ENCODE measurements at regions of chr1 and their contacts with region 1.

Region 1: DNA sequence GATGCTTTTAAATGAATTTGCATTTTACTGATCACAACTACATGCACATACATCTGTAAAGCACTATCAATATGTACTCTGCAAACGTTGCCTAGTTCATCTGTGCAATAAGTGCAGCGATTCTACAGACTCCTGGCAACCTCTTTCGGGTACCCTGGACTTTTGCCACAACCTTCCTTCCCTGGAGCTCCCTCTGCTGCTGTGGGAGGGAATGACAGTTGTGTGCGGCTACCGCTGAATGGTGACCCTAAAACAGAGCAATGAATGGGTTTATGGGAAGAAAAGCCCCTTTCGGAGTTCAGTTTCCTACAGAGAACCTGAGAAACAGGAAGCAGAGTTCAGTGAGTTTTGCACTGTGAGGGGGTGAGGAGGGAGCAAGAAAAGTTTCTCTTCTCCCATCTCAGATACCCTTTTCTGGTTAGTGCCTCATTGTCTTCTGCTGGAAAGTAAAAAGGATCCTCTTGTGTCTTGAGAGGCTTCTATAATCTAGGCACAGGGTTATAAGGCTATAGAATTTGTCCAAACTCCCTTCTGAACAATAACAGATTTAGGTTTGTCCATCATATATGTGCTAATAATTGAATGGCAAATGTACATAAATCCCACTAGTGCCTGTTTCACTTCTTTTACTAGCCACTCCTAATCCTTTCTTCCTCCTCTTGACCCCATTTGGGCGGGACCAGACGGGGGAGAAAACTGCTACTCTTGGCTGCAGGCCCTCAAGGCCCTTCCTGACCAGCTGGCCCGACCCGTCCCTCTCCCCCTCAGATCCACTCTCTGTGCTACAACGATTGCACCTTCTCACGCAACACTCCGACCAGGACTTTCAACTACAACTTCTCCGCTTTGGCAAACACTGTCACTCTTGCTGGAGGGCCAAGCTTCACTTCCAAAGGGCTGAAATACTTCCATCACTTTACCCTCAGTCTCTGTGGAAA is 19.8 kb upstream of the SARS1 start:
- DNase-seq: peak in 7 of 9 donors; percentile 25 to 68 (median 42)
- ATAC-seq: peak; percentile 81
- H3K4me3 ChIP-seq: no peak overlapping the region
- H3K4me3 Mint-ChIP-seq: no peak overlapping the region
- H3K27ac ChIP-seq: no peak overlapping the region
- H3K27ac Mint-ChIP-seq: peak overlapping the region in 1 of 9 donors; percentile 76
- H3K4me1 ChIP-seq: peaks cover 0 to 1% of the 10 kb centered on the region in 2 donors
- H3K4me1 Mint-ChIP-seq: peaks cover 2 to 18% (median 5%) of the 10 kb centered on the region in 7 donors
- H3K27me3 ChIP-seq: no peaks in the 10 kb centered on the region
- H3K27me3 Mint-ChIP-seq: no peaks in the 10 kb centered on the region

Region 2: GRCh38 chr1:108828022-108828961 is 365.6 kb before region 1 on chr1:
- CTCF ChIA-PET with region 1: no interaction called
- POLR2A ChIA-PET with region 1: no interaction called
- intact Hi-C with region 1: loop called in 1 of 2 experiments (anchors 5 kb)
- DNase-seq: peak; percentile 37 to 62 (median 46)
- ATAC-seq: peak; percentile 61
- H3K4me3 ChIP-seq: no peak overlapping the region
- H3K4me3 Mint-ChIP-seq: no peak overlapping the region
- H3K27ac ChIP-seq: no peak overlapping the region
- H3K27ac Mint-ChIP-seq: no peak overlapping the region
- H3K4me1 ChIP-seq: no peaks in the 10 kb centered on the region
- H3K4me1 Mint-ChIP-seq: peaks cover 0 to 9% (median 0%) of the 10 kb centered on the region in 7 donors
- H3K27me3 ChIP-seq: peaks cover 0 to 3% of the 10 kb centered on the region in 2 donors
- H3K27me3 Mint-ChIP-seq: peaks cover 0 to 12% (median 0%) of the 10 kb centered on the region in 5 donors

Region 3: GRCh38 chr1:109090196-109091077 is 103.5 kb before region 1 on chr1 and contains the start of gene TMEM167B:
- CTCF ChIA-PET with region 1: no interaction called
- POLR2A ChIA-PET with region 1: no interaction called
- intact Hi-C with region 1: loop called in 1 of 2 experiments (anchors 1 kb)
- DNase-seq: peak; percentile 71 to 92 (median 87)
- ATAC-seq: peak; percentile 98
- H3K4me3 ChIP-seq: peak within 1 kb of the TSS; percentile 84
- H3K4me3 Mint-ChIP-seq: peak within 1 kb of the TSS; percentile 88 to 98 (median 96)
- H3K27ac ChIP-seq: peak within 1 kb of the TSS; percentile 97
- H3K27ac Mint-ChIP-seq: peak within 1 kb of the TSS; percentile 90 to 99 (median 98)
- H3K4me1 ChIP-seq: peaks cover 14 to 18% of the 10 kb centered on the region in 2 donors
- H3K4me1 Mint-ChIP-seq: peaks cover 15 to 43% (median 36%) of the 10 kb centered on the region in 7 donors
- H3K27me3 ChIP-seq: no peaks in the 10 kb centered on the region
- H3K27me3 Mint-ChIP-seq: no peaks in the 10 kb centered on the region
- total RNA-seq, gene TMEM167B: 33.2 to 65.6 (median 41.2) TPM

Region 4: DNA sequence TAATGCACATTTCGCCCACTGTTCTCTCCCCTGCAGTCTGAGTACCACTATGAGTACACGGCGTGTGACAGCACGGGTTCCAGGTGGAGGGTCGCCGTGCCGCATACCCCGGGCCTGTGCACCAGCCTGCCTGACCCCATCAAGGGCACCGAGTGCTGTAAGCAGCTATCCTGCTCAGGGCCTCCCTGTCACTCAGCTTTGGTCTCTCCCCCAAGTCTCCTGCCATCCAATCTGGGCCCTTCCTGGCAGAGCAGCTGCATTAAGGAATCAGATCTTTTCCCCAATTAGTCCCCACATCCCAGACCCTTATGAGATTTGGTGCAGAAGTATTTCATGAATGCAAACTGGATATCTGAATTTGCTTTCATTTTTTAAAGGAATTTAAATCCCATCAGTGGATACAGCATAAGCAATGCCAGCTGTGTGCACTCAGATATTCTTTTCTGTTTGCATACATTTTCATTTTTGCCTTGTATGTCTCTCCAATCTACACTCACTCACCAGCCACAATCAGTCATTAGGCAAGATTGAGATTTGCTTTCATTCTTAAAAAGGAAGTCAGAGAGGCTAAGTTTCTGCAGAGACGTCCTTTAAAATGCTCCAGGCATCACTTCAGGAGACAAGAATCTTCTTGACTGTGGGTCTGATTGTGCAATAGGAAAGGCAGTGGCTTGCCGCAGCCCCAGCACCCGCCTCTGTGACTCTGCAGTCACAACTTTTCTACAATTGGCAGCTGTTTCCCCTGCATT is 31.9 kb before region 1 on chr1:
- CTCF ChIA-PET with region 1: interaction called, 4 read pairs
- POLR2A ChIA-PET with region 1: no interaction called
- intact Hi-C with region 1: loop called in 1 of 2 experiments (anchors 1 kb)
- DNase-seq: peak in 5 of 9 donors; percentile 5 to 45 (median 12)
- ATAC-seq: peak; percentile 88
- H3K4me3 ChIP-seq: no peak overlapping the region
- H3K4me3 Mint-ChIP-seq: peak overlapping the region in 6 of 10 donors; percentile 31 to 72 (median 52)
- H3K27ac ChIP-seq: no peak overlapping the region
- H3K27ac Mint-ChIP-seq: peak overlapping the region in 8 of 9 donors; percentile 58 to 87 (median 75)
- H3K4me1 ChIP-seq: peaks cover 0 to 14% of the 10 kb centered on the region in 2 donors
- H3K4me1 Mint-ChIP-seq: peaks cover 9 to 24% (median 18%) of the 10 kb centered on the region in 7 donors
- H3K27me3 ChIP-seq: no peaks in the 10 kb centered on the region
- H3K27me3 Mint-ChIP-seq: no peaks in the 10 kb centered on the region

Measured in naive thymus-derived CD4-positive, alpha-beta T cell (primary cell).